ENCODE measurements at regions of chr5 and their contacts with region 1.

Region 1: GRCh38 chr5:35920890-35921289 is 17.5 kb downstream of the CAPSL start:
- DNase-seq: no peak
- ATAC-seq: no peak
- H3K4me3 ChIP-seq: no peak overlapping the region
- H3K27ac ChIP-seq: no peak overlapping the region
- H3K4me1 ChIP-seq: no peaks in the 10 kb centered on the region
- H3K27me3 ChIP-seq: no peaks in the 10 kb centered on the region

Region 2: GRCh38 chr5:35777358-35778087 is 143.4 kb before region 1 on chr5:
- intact Hi-C with region 1: loop called (anchors 2 to 10 kb)
- DNase-seq: peak in 2 of 3 donors; percentile 51 to 78
- ATAC-seq: peak; percentile 40
- H3K4me3 ChIP-seq: no peak overlapping the region
- H3K27ac ChIP-seq: no peak overlapping the region
- H3K4me1 ChIP-seq: no peaks in the 10 kb centered on the region
- H3K27me3 ChIP-seq: no peaks in the 10 kb centered on the region

Region 3: DNA sequence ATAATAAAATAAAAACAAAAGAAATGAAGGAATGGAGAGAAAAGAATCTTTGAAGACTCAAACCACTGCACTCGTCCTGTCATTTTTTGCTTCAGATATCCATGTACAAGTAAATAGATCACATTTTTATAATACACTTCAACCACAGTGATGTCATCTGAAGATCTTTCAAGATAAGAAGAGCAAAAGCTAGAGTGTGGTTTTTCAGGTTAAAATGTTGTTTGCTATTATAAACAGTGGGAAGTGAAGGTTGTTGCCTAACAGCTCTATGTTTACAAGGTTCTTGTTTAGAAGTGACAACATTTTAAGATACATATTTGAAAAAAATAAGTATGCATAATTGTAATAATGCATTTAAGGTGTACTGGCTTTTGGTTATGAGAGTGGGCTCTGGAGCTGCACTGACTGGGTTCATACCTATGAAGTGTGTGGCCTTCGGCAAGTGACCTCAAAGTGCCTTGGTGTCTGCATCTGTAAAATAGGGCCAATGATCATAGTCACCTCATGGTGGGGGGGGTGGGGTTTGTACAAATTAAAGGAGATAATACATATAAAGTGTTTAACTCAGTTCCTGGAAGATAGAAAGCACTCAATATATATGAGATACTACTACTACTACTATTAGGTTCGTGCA is 109.7 kb before region 1 on chr5:
- intact Hi-C with region 1: no loop called
- DNase-seq: no peak
- ATAC-seq: no peak
- H3K4me3 ChIP-seq: no peak overlapping the region
- H3K27ac ChIP-seq: no peak overlapping the region
- H3K4me1 ChIP-seq: no peaks in the 10 kb centered on the region
- H3K27me3 ChIP-seq: no peaks in the 10 kb centered on the region

Region 4: DNA sequence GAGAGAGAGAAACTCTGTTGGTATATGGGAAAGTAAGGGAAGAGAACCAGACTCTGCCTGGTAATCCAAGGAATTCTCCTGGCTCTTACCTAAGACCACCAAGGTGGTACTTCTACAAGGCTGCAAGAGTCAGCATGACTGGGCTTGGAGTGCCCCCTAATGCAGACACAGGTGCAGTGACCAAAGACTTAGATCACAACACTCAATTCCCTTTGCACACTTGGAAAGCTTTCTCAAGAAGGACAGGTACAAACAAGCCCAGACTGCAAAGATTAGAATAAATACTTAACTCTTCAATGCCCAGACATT is 120.6 kb after region 1 on chr5:
- intact Hi-C with region 1: no loop called
- DNase-seq: no peak
- ATAC-seq: no peak
- H3K4me3 ChIP-seq: no peak overlapping the region
- H3K27ac ChIP-seq: no peak overlapping the region
- H3K4me1 ChIP-seq: no peaks in the 10 kb centered on the region
- H3K27me3 ChIP-seq: no peaks in the 10 kb centered on the region

Region 5: GRCh38 chr5:37075399-37075950 is 1154.6 kb after region 1 on chr5:
- intact Hi-C with region 1: no loop called
- DNase-seq: no peak
- ATAC-seq: no peak
- H3K4me3 ChIP-seq: no peak overlapping the region
- H3K27ac ChIP-seq: no peak overlapping the region
- H3K4me1 ChIP-seq: no peaks in the 10 kb centered on the region
- H3K27me3 ChIP-seq: no peaks in the 10 kb centered on the region

Region 6: DNA sequence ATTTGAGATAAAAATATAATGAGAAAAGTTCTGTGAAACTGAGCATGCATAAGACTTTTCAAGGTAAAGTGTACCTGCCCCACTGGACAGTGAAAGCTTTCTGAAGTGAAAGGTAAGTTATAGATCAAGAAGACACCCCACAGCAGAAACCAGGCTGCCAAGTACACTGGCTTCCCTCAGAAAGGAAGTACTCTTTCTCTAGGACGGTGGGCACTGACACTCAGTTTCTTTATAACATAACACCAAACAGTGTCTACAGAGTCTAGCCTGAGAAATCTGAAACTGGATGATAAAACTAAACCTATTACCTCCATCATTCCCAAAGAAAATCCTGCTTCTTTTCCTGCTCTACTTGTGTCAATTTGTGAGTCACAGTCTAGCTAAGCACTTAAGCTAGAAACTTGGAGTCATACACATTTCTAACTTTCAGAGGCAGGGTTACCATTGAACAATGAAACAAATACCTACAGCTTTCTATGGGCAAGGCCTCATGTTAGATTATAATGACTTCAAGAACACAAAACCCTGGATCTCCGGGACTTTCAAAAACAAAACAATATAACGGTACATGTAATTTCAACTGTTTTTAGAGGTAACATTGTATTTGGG is 1191.6 kb after region 1 on chr5:
- intact Hi-C with region 1: no loop called
- DNase-seq: no peak
- ATAC-seq: no peak
- H3K4me3 ChIP-seq: no peak overlapping the region
- H3K27ac ChIP-seq: no peak overlapping the region
- H3K4me1 ChIP-seq: no peaks in the 10 kb centered on the region
- H3K27me3 ChIP-seq: no peaks in the 10 kb centered on the region